ENCODE measurements at regions of chr21 and their contacts with region 1.

Region 1: DNA sequence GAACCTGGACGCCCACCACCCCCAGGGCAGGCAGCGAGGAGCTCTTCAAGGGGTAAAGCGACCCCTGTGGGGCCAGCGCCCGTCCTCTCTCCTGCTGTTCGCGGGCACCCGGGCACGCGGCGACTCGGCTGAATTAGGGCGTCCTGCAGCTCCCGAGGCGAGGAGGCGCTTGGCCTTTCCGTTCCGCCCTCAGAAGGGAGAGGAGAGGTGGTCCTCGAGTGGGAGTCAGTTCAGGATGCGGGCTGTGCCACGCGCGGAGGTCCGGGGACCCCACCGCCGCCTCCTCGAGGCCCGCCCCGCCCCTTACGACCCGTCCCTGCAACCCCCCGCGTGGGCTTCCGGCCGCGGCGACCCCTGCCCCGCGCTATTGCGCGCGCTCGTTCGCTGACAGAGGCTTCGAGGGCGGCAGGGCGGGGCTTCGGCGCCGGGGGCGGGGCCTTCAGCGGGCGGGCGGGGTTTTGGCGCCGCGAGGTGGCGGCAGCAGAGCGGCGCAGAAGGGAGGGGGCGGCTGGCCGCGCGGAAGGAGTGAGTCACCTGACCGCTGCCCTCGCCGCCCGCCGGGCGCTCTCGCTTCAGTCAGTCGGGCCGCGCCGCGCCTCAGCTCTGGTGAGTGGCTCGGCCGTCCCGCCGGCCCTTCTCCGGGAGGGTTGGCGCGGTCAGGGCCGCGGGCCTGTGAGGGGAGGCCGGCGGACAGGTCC is at the start of gene BACH1:
- DNase-seq: peak; percentile 59 to 91 (median 76)
- ATAC-seq: peak; percentile 80
- H3K4me3 ChIP-seq: peak within 1 kb of the TSS; percentile 71
- H3K4me3 Mint-ChIP-seq: peak within 1 kb of the TSS; percentile 84 to 94 (median 90)
- H3K27ac ChIP-seq: peak within 1 kb of the TSS; percentile 86
- H3K27ac Mint-ChIP-seq: peak within 1 kb of the TSS; percentile 71 to 91 (median 78)
- H3K4me1 ChIP-seq: peaks cover 4 to 47% of the 10 kb centered on the region in 2 donors
- H3K4me1 Mint-ChIP-seq: peaks cover 42 to 85% (median 74%) of the 10 kb centered on the region in 7 donors
- H3K27me3 ChIP-seq: no peaks in the 10 kb centered on the region
- H3K27me3 Mint-ChIP-seq: peaks cover 0 to 3% (median 0%) of the 10 kb centered on the region in 5 donors
- total RNA-seq, gene BACH1: 26.0 to 95.6 (median 45.5) TPM

Region 2: DNA sequence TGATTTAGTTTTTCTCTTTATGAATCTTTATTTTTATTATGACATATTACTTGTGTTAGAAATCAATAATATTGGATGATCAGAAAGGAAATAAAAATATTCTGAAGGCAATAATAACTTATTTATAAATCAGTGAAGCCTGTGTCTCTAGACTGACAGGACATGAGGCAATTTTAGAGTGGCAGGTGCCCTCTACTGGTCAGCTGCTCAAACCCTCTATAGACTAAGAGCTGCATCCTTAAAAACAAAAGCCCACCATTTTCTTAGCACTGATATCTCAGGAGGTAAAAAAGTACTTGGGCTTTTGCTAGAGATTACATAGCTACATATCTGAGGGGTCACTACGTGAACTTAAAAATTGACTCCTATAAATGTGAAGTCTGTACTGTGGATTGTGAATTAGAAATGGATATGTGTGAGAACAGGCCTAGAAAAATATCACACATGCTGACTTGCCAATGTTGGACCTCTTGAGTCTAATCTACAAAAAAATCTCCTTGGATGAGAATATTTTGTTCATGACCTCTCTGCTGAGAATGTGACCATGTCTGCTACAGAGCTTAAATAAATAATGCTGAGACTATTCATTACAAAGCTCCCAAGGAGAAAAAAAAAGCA is 1733.7 kb before region 1 on chr21:
- CTCF ChIA-PET with region 1: no interaction called
- POLR2A ChIA-PET with region 1: no interaction called
- intact Hi-C with region 1: no loop called
- DNase-seq: no peak
- ATAC-seq: no peak
- H3K4me3 ChIP-seq: no peak overlapping the region
- H3K4me3 Mint-ChIP-seq: no peak overlapping the region
- H3K27ac ChIP-seq: no peak overlapping the region
- H3K27ac Mint-ChIP-seq: no peak overlapping the region
- H3K4me1 ChIP-seq: no peaks in the 10 kb centered on the region
- H3K4me1 Mint-ChIP-seq: no peaks in the 10 kb centered on the region
- H3K27me3 ChIP-seq: no peaks in the 10 kb centered on the region
- H3K27me3 Mint-ChIP-seq: no peaks in the 10 kb centered on the region

Region 3: GRCh38 chr21:28884976-28885852 is 413.3 kb before region 1 on chr21:
- CTCF ChIA-PET with region 1: no interaction called
- POLR2A ChIA-PET with region 1: no interaction called
- intact Hi-C with region 1: loop called (anchors 1 kb)
- DNase-seq: peak; percentile 84 to 95 (median 92)
- ATAC-seq: peak; percentile 95
- H3K4me3 ChIP-seq: peak overlapping the region; percentile 71
- H3K4me3 Mint-ChIP-seq: peak overlapping the region; percentile 89 to 99 (median 94)
- H3K27ac ChIP-seq: peak overlapping the region; percentile 80
- H3K27ac Mint-ChIP-seq: peak overlapping the region; percentile 98 to 99 (median 99)
- H3K4me1 ChIP-seq: peaks cover 9 to 14% of the 10 kb centered on the region in 2 donors
- H3K4me1 Mint-ChIP-seq: peaks cover 8 to 25% (median 20%) of the 10 kb centered on the region in 7 donors
- H3K27me3 ChIP-seq: no peaks in the 10 kb centered on the region
- H3K27me3 Mint-ChIP-seq: peaks cover 0 to 29% (median 0%) of the 10 kb centered on the region in 5 donors

Region 4: GRCh38 chr21:29024474-29025327 is 273.8 kb before region 1 on chr21 and contains the start of gene USP16:
- CTCF ChIA-PET with region 1: no interaction called
- POLR2A ChIA-PET with region 1: interaction called, 5 read pairs
- intact Hi-C with region 1: loop called in 1 of 2 experiments (anchors 1 kb)
- DNase-seq: peak; percentile 86 to 97 (median 96)
- ATAC-seq: peak; percentile 94
- H3K4me3 ChIP-seq: peak within 1 kb of the TSS; percentile 88
- H3K4me3 Mint-ChIP-seq: peak within 1 kb of the TSS; percentile 88 to 99 (median 96)
- H3K27ac ChIP-seq: peak within 1 kb of the TSS; percentile 93
- H3K27ac Mint-ChIP-seq: peak within 1 kb of the TSS; percentile 97 to 100 (median 99)
- H3K4me1 ChIP-seq: peaks cover 35 to 41% of the 10 kb centered on the region in 2 donors
- H3K4me1 Mint-ChIP-seq: peaks cover 21 to 79% (median 53%) of the 10 kb centered on the region in 7 donors
- H3K27me3 ChIP-seq: no peaks in the 10 kb centered on the region
- H3K27me3 Mint-ChIP-seq: no peaks in the 10 kb centered on the region
- total RNA-seq, gene USP16: 40.9 to 84.3 (median 62.7) TPM

Region 5: DNA sequence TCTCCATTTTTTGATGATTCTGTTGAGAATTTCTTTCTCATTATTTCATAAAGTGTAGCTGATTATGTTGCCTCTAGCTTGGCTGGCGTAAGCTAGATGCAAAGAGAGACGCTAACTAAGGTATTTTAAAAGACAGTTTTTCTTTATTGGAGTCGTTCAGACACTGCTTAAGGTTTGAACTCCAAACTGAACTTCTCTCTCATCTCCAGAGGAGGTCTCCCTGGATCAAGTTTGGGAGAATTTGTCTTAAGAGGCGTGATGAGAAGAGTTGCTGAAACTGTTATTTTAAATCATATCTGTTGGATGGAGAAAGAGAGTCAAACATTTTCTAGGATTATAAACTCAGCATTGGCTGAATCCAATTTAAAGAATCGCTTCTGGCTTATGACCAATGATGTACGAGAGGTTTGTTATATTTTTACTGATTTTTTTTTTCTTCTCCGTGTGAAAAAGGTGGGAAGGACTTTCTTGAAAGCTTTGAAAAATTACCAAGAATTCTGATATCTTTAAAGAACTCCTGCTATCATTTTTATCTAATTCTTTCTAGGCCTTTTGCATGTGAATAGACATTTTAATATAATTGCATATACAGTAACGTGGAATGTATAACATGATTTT is 134.1 kb before region 1 on chr21:
- CTCF ChIA-PET with region 1: no interaction called
- POLR2A ChIA-PET with region 1: no interaction called
- intact Hi-C with region 1: loop called (anchors 1 to 5 kb)
- DNase-seq: peak in 1 of 9 donors; percentile 6
- ATAC-seq: no peak
- H3K4me3 ChIP-seq: no peak overlapping the region
- H3K4me3 Mint-ChIP-seq: no peak overlapping the region
- H3K27ac ChIP-seq: no peak overlapping the region
- H3K27ac Mint-ChIP-seq: no peak overlapping the region
- H3K4me1 ChIP-seq: no peaks in the 10 kb centered on the region
- H3K4me1 Mint-ChIP-seq: peaks cover 0 to 15% (median 0%) of the 10 kb centered on the region in 7 donors
- H3K27me3 ChIP-seq: no peaks in the 10 kb centered on the region
- H3K27me3 Mint-ChIP-seq: peaks cover 0 to 3% (median 0%) of the 10 kb centered on the region in 5 donors

Region 6: DNA sequence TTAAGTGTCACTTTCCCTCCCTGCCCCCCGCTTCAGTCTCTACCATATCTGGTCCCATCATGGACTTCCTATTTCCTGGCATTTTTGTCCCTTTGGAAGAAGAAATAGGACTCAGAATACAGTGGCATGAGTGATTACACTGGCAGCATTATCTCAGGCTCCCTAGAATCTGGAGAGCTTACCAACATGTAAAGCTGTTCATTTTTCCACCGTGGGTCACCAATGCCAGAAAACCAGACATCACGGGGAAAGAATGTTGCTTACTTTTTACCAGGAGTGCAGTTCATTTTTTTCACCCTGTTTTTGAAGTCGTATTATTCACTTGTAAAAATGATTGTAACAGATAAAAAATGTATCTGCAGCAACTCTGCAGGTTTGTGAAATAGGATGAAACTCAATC is 45.0 kb after region 1 on chr21:
- CTCF ChIA-PET with region 1: interaction called, 4 read pairs
- POLR2A ChIA-PET with region 1: interaction called, 3 read pairs
- intact Hi-C with region 1: loop called (anchors 1 to 2 kb)
- DNase-seq: no peak
- ATAC-seq: no peak
- H3K4me3 ChIP-seq: no peak overlapping the region
- H3K4me3 Mint-ChIP-seq: no peak overlapping the region
- H3K27ac ChIP-seq: no peak overlapping the region
- H3K27ac Mint-ChIP-seq: no peak overlapping the region
- H3K4me1 ChIP-seq: peaks cover 0 to 6% of the 10 kb centered on the region in 2 donors
- H3K4me1 Mint-ChIP-seq: peaks cover 4 to 31% (median 15%) of the 10 kb centered on the region in 7 donors
- H3K27me3 ChIP-seq: no peaks in the 10 kb centered on the region
- H3K27me3 Mint-ChIP-seq: no peaks in the 10 kb centered on the region

Region 7: GRCh38 chr21:29436143-29436542 is 137.6 kb after region 1 on chr21:
- CTCF ChIA-PET with region 1: no interaction called
- POLR2A ChIA-PET with region 1: interaction called, 3 read pairs
- intact Hi-C with region 1: loop called (anchors 2 to 10 kb)
- DNase-seq: peak in 8 of 9 donors; percentile 28 to 69 (median 54)
- ATAC-seq: peak; percentile 90
- H3K4me3 ChIP-seq: peak overlapping the region; percentile 41
- H3K4me3 Mint-ChIP-seq: peak overlapping the region; percentile 80 to 91 (median 88)
- H3K27ac ChIP-seq: peak overlapping the region; percentile 63
- H3K27ac Mint-ChIP-seq: peak overlapping the region; percentile 81 to 98 (median 94)
- H3K4me1 ChIP-seq: peaks cover 10 to 17% of the 10 kb centered on the region in 2 donors
- H3K4me1 Mint-ChIP-seq: peaks cover 12 to 55% (median 34%) of the 10 kb centered on the region in 7 donors
- H3K27me3 ChIP-seq: no peaks in the 10 kb centered on the region
- H3K27me3 Mint-ChIP-seq: no peaks in the 10 kb centered on the region

Measured in naive thymus-derived CD4-positive, alpha-beta T cell (primary cell).